ENCODE measurements at regions of chr22 and their contacts with region 1.

Region 1: GRCh38 chr22:47012589-47013411 is 250.3 kb downstream of the TBC1D22A start:
- DNase-seq: no peak
- ATAC-seq: no peak
- H3K4me3 ChIP-seq: no peak overlapping the region
- H3K27ac ChIP-seq: no peak overlapping the region
- H3K4me1 ChIP-seq: no peaks in the 10 kb centered on the region
- H3K27me3 ChIP-seq: no peaks in the 10 kb centered on the region
- CTCF ChIP-seq: no peak
- EP300 ChIP-seq: no peak
- POLR2A ChIP-seq: no peak
- RAD21 ChIP-seq: no peak

Region 2: DNA sequence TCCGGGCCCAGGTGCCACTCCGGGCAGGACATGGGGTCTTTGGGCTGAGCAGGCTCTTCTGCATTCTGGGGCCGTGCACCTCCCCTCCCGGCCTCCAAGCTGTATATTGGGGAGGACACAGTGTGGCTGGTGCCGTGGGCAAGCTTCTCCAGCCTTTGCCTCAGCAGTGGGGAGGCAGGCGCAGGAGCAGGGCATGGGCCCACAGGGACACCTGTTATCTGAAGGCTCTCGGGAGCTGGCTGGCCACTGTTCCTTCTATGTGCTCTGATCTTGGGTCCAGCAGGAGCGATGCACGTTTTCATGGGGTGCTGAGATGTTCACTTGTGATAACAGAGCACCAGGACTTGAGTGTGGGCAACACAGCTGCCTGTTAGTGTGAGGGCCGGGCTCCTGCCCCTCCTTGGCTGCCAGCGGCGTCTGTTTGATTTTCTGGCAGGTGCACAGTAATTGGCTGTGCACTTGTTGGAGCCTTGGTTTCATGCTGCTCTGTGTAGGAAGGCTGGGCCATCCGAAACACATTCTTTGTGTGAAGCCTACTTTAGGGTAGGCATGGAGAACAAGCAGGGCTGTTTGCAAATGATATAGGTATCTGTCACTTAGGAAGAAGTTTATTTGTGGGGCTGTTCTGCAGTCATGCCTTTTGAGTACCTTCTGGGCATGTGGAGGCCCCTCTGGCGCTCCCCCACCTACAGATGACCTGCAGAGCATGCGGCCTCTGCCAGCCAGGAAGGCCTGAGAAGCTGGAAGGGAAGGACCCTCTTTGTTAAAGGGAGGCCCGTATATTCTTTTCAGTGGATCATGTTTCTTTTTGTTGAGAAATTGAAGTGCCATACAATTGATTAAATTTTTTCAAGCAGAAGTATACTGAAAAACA is 48.9 kb before region 1 on chr22:
- CTCF ChIA-PET with region 1: no interaction called
- POLR2A ChIA-PET with region 1: no interaction called
- RAD21 ChIA-PET with region 1: no interaction called
- SMC1A ChIA-PET with region 1: no interaction called
- in situ Hi-C with region 1: loop called (anchors 5 kb)
- intact Hi-C with region 1: no loop called
- DNase-seq: no peak
- ATAC-seq: no peak
- H3K4me3 ChIP-seq: no peak overlapping the region
- H3K27ac ChIP-seq: no peak overlapping the region
- H3K4me1 ChIP-seq: peaks cover 6% of the 10 kb centered on the region; the same call in 1 of the 2 replicates
- H3K27me3 ChIP-seq: no peaks in the 10 kb centered on the region
- CTCF ChIP-seq: no peak
- EP300 ChIP-seq: no peak
- POLR2A ChIP-seq: no peak
- RAD21 ChIP-seq: no peak

Measured in GM12878 (cell line).